Ascending aorta (tissue), 2 donors: ENCODE measurements at regions of chr17 and their contacts with region 1.

Region 1: DNA sequence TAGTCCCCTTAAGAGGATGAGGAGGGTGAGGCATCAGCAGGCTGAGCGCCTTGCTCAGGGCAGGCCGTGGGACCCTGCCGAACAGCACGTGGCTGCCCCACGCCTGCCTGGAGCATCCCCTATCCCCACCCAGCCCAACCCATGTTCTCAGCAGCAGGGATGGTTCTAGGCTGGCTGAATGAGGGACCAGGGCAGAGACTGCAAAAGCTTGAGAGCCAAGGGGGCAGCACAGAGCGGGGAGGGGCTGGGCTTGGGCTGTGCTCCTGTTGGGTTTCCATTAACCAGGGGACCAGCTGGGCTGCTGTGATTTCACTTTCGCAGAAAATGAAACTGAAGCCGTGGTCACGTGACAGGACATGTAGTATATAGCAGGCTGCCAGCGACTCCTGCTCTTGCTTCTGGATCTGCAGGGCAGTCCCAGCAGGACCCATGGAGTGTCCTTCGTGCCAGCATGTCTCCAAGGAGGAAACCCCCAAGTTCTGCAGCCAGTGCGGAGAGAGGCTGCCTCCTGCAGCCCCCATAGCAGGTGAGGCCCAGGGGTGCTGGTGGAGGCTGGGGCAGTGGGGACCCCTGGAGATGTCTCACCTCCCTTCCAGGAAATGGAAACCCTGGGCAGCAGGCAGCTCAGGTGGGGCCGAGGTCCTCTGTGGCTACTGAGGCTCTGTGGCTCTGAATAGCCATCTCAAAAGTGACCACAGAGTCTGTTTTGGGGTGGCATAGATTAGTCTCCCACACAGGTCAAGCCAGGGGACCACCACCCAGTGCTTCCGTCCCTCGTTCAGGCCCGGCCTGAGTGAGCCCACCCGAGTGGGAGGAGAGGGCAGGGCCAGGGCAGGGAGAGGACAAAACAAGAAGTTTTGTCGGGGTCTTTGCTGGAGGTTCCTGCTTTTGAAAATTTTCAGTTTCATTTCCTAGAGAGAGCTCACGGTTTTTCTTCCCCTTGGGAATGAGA is 2.9 kb downstream of the RNF213 start:
- DNase-seq: peak; percentile 71 to 89
- H3K4me3 ChIP-seq: peak overlapping the region; percentile 26 to 57
- H3K27ac ChIP-seq: peak overlapping the region; percentile 72 to 97
- H3K4me1 ChIP-seq: peaks cover 15 to 28% of the 10 kb centered on the region in 2 donors
- H3K27me3 ChIP-seq: no peaks in the 10 kb centered on the region
- CTCF ChIP-seq: peak in 1 of 3 experiments; percentile 8

Region 2: GRCh38 chr17:80101011-80101945 is 162.3 kb before region 1 on chr17 and contains the start of gene GAA:
- intact Hi-C with region 1: loop called (anchors 5 kb)
- DNase-seq: peak; percentile 24 to 89
- H3K4me3 ChIP-seq: peak within 1 kb of the TSS; percentile 80 to 98
- H3K27ac ChIP-seq: peak within 1 kb of the TSS; percentile 81 to 93
- H3K4me1 ChIP-seq: peaks cover 3 to 7% of the 10 kb centered on the region in 2 donors
- H3K27me3 ChIP-seq: no peaks in the 10 kb centered on the region
- CTCF ChIP-seq: peak; percentile 41 to 95 (median 66)
- total RNA-seq, gene GAA: 91.6 TPM

Region 3: DNA sequence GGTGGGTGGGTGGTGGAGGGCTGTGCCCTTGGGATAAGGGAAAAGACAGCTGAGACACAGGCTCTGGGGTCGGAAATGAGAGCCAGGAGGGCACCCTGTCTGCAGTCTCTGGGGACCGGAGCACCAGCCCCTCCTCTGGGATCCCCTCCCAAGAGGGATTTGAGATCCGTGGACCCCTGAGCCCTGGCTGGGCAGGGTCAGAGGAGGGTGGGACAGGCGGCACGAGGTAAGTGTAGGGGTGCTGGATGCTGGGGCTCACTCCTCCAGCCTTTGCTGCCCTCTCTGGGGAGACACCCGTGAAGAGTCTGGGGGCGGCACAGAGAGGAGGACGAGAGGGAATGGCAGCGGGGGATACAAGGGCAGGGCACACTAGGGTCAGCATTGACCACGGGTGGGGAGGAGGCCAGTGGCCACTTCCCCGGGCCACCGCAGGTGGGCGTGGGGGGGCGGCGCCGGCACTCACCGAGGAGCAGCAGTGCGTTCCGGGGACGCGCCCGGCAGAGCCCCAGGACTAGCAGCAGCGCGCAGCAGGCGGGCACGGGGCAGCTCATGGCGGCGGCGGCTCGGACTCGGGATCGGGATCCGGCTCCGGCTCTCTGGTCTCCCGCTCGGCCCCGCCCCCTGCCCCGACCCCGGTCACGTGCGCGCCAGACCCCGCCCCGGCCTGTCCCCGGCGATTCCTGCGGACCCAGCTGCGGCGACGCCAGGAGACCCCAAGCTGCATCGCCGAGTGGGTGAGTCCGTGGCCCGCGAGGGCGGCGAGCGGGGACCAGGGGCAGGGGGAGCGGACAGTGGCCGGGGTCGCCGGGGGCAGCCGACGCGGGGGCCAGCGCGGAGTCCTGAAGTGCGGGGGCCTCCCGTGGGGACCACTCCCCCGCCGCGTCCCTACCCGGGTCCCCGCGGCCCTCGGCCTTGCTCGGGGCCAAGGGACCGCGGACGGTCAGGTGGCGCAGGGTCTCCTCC is 43.5 kb before region 1 on chr17 and contains the starts of genes SGSH and SLC26A11:
- intact Hi-C with region 1: loop called (anchors 2 kb)
- DNase-seq: peak; percentile 37 to 88
- H3K4me3 ChIP-seq: peak within 1 kb of the TSS; percentile 96 to 97
- H3K27ac ChIP-seq: peak within 1 kb of the TSS; percentile 82 to 85
- H3K4me1 ChIP-seq: peaks cover 3 to 9% of the 10 kb centered on the region in 2 donors
- H3K27me3 ChIP-seq: no peaks in the 10 kb centered on the region
- CTCF ChIP-seq: no peak
- total RNA-seq, gene SGSH: 50.9 TPM
- total RNA-seq, gene SLC26A11: 25.8 TPM

Region 4: DNA sequence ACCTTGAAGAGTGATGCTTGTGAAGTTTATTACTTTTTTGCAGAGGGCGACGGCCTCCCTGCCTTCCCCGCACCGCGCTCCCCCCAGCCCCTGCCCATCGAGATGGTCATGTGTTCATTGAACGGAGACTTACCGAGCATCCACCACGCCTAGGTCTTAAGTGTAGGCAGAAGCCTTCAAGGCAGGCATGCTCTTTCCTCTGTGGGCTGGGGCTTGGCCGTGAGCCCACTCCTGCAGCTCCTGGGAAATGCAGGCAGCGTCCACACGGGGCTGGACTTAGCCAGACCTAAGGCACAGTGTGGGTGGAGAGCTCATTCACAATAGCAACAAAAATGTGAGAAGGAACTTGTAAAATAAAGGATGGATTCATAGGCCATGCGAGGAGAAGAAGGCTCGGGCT is 16.4 kb after region 1 on chr17:
- intact Hi-C with region 1: loop called (anchors 2 kb)
- DNase-seq: no peak
- H3K4me3 ChIP-seq: no peak overlapping the region
- H3K27ac ChIP-seq: peak overlapping the region in 1 of 2 donors; percentile 61
- H3K4me1 ChIP-seq: peaks cover 3 to 24% of the 10 kb centered on the region in 2 donors
- H3K27me3 ChIP-seq: no peaks in the 10 kb centered on the region
- CTCF ChIP-seq: peak in 1 of 3 experiments; percentile 10

Region 5: GRCh38 chr17:80441133-80441578 is 177.6 kb after region 1 on chr17:
- intact Hi-C with region 1: no loop called
- DNase-seq: no peak
- H3K4me3 ChIP-seq: no peak overlapping the region
- H3K27ac ChIP-seq: no peak overlapping the region
- H3K4me1 ChIP-seq: peaks cover 10 to 17% of the 10 kb centered on the region in 2 donors
- H3K27me3 ChIP-seq: no peaks in the 10 kb centered on the region
- CTCF ChIP-seq: no peak

Region 6: GRCh38 chr17:80586846-80587228 is 323.3 kb after region 1 on chr17:
- intact Hi-C with region 1: no loop called
- DNase-seq: no peak
- H3K4me3 ChIP-seq: peak overlapping the region in 1 of 2 donors; percentile 16
- H3K27ac ChIP-seq: peak overlapping the region in 1 of 2 donors; percentile 6
- H3K4me1 ChIP-seq: no peaks in the 10 kb centered on the region
- H3K27me3 ChIP-seq: no peaks in the 10 kb centered on the region
- CTCF ChIP-seq: no peak